Transverse colon (tissue), 4 donors: ENCODE measurements at regions of chr3 and their contacts with region 1.

Region 1: DNA sequence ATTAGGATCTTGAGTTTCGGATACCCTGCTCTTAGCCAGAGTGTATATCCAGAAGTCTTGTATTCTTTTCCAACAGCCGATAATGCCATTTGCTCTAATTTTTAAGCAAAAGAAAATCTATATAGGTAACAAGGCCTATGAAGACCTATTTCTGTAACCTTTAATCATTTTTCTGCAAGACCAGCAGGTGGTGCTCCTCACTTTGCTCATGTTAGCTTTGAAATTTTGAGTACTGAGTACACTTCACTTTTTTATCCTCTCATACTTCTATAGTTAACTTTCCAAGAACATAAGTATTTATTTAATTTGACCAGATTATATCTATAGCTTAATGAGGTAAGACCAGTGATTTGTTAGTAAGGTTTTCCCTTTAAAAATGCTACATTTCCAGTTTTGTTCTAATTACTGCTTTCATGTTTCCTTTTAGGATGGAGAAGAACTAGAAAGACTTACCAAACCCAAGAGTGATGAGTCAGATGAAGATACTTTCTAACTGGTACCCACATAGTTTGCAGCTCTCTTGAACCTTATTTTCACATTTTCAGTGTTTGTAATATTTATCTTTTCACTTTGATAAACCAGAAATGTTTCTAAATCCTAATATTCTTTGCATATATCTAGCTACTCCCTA is 20.5 kb downstream of the SLC35A5 start:
- DNase-seq: no peak
- H3K4me3 ChIP-seq: no peak overlapping the region
- H3K27ac ChIP-seq: no peak overlapping the region
- H3K4me1 ChIP-seq: no peaks in the 10 kb centered on the region
- H3K27me3 ChIP-seq: no peaks in the 10 kb centered on the region
- CTCF ChIP-seq: peak; percentile 42 to 49 (median 45)
- EP300 ChIP-seq: no peak
- POLR2A ChIP-seq: no peak

Region 2: GRCh38 chr3:112623717-112624116 is 41.4 kb after region 1 on chr3:
- in situ Hi-C with region 1: no loop called
- intact Hi-C with region 1: loop called (anchors 2 kb)
- DNase-seq: no peak
- H3K4me3 ChIP-seq: no peak overlapping the region
- H3K27ac ChIP-seq: no peak overlapping the region
- H3K4me1 ChIP-seq: no peaks in the 10 kb centered on the region
- H3K27me3 ChIP-seq: no peaks in the 10 kb centered on the region
- CTCF ChIP-seq: no peak
- EP300 ChIP-seq: no peak
- POLR2A ChIP-seq: no peak

Region 3: DNA sequence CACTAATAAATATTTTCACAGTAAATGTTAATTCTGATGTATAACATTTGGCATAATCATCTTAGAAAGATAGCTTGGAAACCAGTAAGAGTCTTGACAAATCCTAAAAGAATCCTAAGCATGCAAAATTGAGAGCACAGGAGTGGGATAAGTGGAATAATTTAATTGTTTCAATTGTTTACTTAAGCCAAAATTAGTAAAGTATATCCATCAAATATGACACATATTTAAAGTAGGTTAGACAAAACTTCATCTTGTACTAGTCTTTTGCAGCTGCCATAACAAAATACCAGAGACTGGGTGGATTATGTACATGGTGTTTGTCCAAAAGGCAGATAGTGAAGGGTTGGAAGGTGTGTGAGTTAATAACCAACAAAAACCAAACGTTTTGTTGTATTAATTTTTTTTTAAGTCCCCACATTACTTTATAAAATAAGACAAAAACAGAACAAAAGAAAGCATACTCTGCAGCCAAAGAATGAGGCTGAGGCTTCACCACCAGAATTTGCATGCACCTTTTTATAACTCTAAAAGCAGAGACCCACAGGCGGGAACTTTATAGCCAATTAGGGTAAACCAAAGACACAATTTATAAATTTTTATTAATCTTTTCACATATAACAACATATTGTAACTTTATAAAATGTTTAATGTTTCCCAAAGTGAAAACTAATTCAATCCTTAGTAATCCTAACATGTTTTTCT is 306.2 kb after region 1 on chr3:
- in situ Hi-C with region 1: no loop called
- intact Hi-C with region 1: no loop called
- DNase-seq: no peak
- H3K4me3 ChIP-seq: no peak overlapping the region
- H3K27ac ChIP-seq: no peak overlapping the region
- H3K4me1 ChIP-seq: no peaks in the 10 kb centered on the region
- H3K27me3 ChIP-seq: no peaks in the 10 kb centered on the region
- CTCF ChIP-seq: no peak
- EP300 ChIP-seq: no peak
- POLR2A ChIP-seq: no peak

Region 4: GRCh38 chr3:112979240-112979832 is 397.0 kb after region 1 on chr3:
- in situ Hi-C with region 1: no loop called
- intact Hi-C with region 1: loop called (anchors 10 kb)
- DNase-seq: no peak
- H3K4me3 ChIP-seq: no peak overlapping the region
- H3K27ac ChIP-seq: no peak overlapping the region
- H3K4me1 ChIP-seq: peaks cover 0 to 4% (median 0%) of the 10 kb centered on the region in 4 donors
- H3K27me3 ChIP-seq: no peaks in the 10 kb centered on the region
- CTCF ChIP-seq: peak; percentile 63 to 73 (median 72)
- EP300 ChIP-seq: no peak
- POLR2A ChIP-seq: no peak